PC-3 (cell line): ENCODE measurements at regions of chr6 and their contacts with region 1.

Region 1: DNA sequence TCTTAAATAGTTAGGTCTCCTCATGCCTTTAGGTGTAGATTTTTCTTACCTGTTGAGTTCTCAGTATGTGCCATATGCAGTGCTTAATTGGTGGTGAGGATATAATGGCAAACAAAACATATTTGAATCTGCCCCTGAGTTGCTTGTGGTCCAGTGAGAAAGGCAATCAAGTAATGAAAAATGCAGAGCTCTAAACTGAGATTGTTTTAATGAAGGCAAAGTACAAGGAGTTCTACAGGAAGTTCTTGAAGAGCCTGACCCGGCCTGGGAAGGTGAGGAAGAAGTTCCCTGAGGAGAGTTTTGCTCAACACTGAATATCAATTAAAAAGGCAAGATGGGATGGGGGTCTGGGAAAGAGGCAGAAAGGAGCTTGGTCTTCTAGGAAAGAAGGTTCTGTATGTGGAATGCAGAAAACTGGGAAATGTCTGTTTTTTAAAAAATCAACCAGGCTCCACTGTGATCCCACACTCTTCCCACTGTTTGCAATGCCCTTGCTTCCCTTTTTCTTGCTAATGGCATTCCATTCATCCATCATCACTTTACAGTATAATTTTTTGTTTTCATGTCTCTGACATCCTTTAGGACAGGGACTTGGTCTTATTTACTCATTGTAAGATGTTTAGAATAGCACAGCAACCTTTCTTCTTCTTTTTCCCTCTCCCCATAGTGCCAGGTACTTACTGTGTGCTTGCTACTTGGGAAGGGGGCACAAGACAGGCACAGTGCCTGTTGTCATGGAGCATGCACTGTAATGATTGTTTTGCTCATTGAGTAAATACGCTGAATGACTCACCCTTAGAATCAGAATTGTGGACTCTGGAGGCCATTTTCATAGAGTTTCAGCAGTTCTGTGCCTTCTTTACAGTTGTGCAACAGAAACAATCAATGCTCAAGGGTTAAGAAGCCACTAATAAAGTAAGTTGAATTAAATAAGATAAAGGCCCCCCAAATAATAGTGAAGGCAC is 64.3 kb downstream of the ANKS1A start:
- DNase-seq: peak; percentile 92
- ATAC-seq: peak; percentile 98
- H3K4me3 ChIP-seq: no peak overlapping the region
- H3K27ac ChIP-seq: peak overlapping the region; percentile 59
- H3K4me1 ChIP-seq: peaks cover 21% of the 10 kb centered on the region
- H3K27me3 ChIP-seq: no peaks in the 10 kb centered on the region
- CTCF ChIP-seq: no peak

Region 2: GRCh38 chr6:34887753-34888513 is 65.4 kb before region 1 on chr6 and contains the start of gene TAF11:
- CTCF ChIA-PET with region 1: no interaction called
- POLR2A ChIA-PET with region 1: no interaction called
- intact Hi-C with region 1: loop called (anchors 2 kb)
- DNase-seq: peak; percentile 97
- ATAC-seq: peak; percentile 79
- H3K4me3 ChIP-seq: peak within 1 kb of the TSS; percentile 90
- H3K27ac ChIP-seq: peak within 1 kb of the TSS; percentile 48
- H3K4me1 ChIP-seq: peaks cover 12% of the 10 kb centered on the region
- H3K27me3 ChIP-seq: no peaks in the 10 kb centered on the region
- CTCF ChIP-seq: no peak
- total RNA-seq, gene TAF11: 24.1 and 28.9 TPM in 2 replicates

Region 3: DNA sequence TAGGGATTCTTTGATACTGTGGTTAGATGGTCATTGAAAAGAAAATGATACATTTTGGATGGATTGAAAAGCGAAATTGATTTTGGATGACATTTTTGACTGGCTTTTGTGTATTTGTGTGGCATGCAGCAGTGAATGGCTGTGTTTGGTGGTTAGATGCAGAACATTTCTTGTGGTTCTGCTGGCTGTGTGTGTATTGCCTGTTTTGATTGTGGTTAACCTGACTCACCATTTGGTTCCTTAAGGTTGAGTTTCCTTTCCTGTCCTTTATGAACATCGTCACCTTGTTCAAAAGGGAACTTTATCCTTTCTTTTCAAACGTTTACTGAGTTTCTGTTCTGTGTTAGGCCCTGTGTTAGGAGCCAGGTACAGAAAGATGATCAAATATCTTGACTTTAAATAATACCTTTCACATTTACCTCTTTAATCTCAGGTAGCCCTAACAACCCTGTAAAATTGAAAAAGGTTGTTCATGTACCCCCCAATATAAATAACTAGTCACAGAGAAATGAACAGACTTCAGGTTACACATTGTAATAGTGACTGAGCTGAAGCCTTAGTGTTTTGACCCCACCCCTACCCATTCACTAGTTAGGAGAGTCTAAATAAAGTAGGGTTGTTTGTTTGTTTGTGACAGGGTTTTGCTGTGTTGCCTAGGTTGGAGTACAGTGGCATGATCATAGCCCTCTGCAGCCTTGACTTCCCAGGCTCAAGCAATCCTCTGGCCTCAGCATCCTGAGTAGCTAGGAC is 40.5 kb before region 1 on chr6:
- CTCF ChIA-PET with region 1: no interaction called
- POLR2A ChIA-PET with region 1: no interaction called
- intact Hi-C with region 1: loop called (anchors 5 kb)
- DNase-seq: peak; percentile 83
- ATAC-seq: peak; percentile 96
- H3K4me3 ChIP-seq: peak overlapping the region; percentile 36; the same call in 1 of the 2 replicates
- H3K27ac ChIP-seq: peak overlapping the region; percentile 75
- H3K4me1 ChIP-seq: peaks cover 35% of the 10 kb centered on the region
- H3K27me3 ChIP-seq: no peaks in the 10 kb centered on the region
- CTCF ChIP-seq: no peak